ENCODE measurements at regions of chr6 and their contacts with region 1.

Region 1: DNA sequence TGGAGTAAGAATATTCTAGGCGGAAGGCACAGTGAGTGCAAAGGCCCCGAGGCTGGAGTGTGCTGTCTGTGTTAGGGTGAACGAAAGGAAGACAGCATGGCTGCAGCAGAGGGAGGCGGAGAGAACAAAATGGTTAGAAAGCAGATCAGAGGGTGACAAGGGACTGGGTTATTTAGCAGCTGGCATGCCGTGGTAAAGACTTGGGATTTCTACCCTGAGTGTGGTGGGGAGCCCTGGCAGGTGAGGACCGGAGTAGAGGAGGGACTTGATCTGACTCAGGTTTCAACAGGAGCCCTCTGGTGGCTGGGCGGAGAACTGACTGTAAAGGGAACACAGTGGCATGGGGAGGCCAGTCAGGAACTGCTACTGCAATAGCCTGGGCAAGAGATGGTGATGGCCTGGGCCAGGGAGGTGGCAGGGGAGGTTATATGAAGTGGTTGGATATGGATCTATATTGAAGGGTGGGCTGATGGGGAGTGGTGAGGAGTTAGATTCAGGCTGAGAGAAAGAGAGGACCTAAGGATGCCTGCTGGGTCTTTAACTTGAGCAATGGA is 38.0 kb downstream of the PIM1 start:
- DNase-seq: peak; percentile 80 to 87 (median 86)
- ATAC-seq: peak; percentile 72
- H3K4me3 ChIP-seq: no peak overlapping the region
- H3K27ac ChIP-seq: no peak overlapping the region
- H3K4me1 ChIP-seq: peaks cover 5% of the 10 kb centered on the region
- H3K27me3 ChIP-seq: no peaks in the 10 kb centered on the region
- CTCF ChIP-seq: peak; percentile 31 to 79 (median 61)
- POLR2A ChIP-seq: no peak

Region 2: GRCh38 chr6:37018198-37019064 is 189.5 kb before region 1 on chr6:
- intact Hi-C with region 1: loop called (anchors 5 kb)
- DNase-seq: peak; percentile 93 to 96 (median 94)
- ATAC-seq: peak; percentile 95
- H3K4me3 ChIP-seq: no peak overlapping the region
- H3K27ac ChIP-seq: peak overlapping the region in 3 of 4 donors; percentile 27 to 66 (median 47)
- H3K4me1 ChIP-seq: peaks cover 33% of the 10 kb centered on the region
- H3K27me3 ChIP-seq: no peaks in the 10 kb centered on the region
- CTCF ChIP-seq: peak; percentile 51 to 97 (median 96)
- POLR2A ChIP-seq: no peak

Measured in body of pancreas (tissue), 4 donors.